H1 (cell line): ENCODE measurements at regions of chr6 and their contacts with region 1.

Region 1: GRCh38 chr6:142474531-142475289 is 172.9 kb downstream of the ADGRG6 start:
- DNase-seq: peak; percentile 33 to 76
- H3K4me3 ChIP-seq: peak overlapping the region in 1 of 4 experiments; percentile 30; a peak in 1 of 8 replicates
- H3K27ac ChIP-seq: no peak overlapping the region
- H3K4me1 ChIP-seq: peaks cover 0 to 4% (median 0%) of the 10 kb centered on the region in 4 experiments; a peak in 1 of 7 replicates
- H3K27me3 ChIP-seq: no peaks in the 10 kb centered on the region
- CTCF ChIP-seq: peak; percentile 68 to 83 (median 70)
- EP300 ChIP-seq: no peak
- POLR2A ChIP-seq: no peak
- RAD21 ChIP-seq: peak; percentile 80 to 83

Region 2: DNA sequence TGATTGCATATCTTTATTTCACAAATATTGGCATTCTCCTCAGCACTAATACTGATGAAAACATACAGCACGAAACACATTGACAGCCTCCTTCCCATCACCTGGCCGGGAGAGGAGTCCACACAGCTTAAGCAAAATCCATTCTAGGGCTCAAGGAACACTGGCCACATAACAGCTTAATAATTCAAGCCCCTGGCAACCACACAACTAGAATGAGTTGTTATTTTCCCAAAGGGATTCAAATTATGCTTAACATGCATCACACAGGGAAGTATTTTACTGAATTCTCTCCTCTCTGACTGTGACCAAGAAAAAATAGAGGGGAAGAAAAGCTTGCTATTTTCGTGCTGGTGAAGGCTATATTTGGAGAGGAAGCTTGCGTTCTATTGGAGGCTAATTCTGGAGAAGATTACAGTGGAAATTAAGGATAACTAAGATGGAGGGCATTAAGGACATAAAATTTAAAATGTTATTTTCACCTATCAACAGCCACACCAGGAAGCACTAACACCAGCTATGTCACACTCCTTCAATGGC is 25.6 kb after region 1 on chr6:
- CTCF ChIA-PET with region 1: interaction called, 13 read pairs
- POLR2A ChIA-PET with region 1: no interaction called
- DNase-seq: no peak
- H3K4me3 ChIP-seq: no peak overlapping the region
- H3K27ac ChIP-seq: no peak overlapping the region
- H3K4me1 ChIP-seq: no peaks in the 10 kb centered on the region
- H3K27me3 ChIP-seq: no peaks in the 10 kb centered on the region
- CTCF ChIP-seq: no peak
- EP300 ChIP-seq: no peak
- POLR2A ChIP-seq: no peak
- RAD21 ChIP-seq: no peak

Region 3: DNA sequence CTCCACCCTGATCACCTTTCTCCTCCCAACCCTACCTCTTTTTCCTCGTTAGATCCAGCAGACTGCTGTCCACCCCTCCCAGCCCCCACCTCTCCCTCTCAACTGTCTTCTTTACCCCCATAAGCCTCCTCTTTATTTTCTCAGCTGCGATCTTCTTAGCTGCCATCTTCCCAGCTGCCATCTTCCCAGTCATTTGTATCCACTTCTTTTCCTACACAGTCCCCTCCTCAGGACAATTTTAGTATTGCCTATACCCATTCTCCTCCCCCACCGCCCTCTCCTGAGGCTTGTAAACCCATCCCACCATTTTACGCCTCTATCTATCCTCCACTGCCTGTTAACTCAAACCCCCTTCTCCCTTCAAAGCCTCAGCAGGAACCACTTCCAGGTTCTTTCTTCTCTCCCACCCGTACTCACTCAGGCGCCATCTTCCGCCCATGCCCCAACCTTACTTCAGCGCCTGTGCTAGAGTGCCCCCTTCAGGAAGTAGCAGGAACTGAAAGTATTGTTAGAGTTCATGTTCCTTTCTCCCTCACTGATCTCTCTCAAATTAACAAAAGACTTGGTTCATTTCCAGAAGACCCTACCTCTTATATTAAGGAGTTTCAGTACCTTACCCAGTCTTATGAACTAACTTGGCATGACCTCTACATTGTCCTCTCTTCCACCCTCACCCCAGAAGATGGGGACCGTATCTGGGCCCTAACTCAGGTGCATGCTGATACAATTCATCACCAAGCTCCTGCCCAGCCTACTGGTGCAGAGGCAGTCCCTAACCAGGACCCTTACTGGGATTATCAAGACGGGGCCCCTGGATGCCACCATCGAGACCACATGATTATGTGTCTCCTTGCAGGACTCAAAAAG is 63.1 kb after region 1 on chr6:
- CTCF ChIA-PET with region 1: interaction called, 36 read pairs
- POLR2A ChIA-PET with region 1: no interaction called
- DNase-seq: peak; percentile 9 to 79
- H3K4me3 ChIP-seq: no peak overlapping the region
- H3K27ac ChIP-seq: no peak overlapping the region
- H3K4me1 ChIP-seq: no peaks in the 10 kb centered on the region
- H3K27me3 ChIP-seq: no peaks in the 10 kb centered on the region
- CTCF ChIP-seq: peak; percentile 53 to 80 (median 67)
- EP300 ChIP-seq: no peak
- POLR2A ChIP-seq: no peak
- RAD21 ChIP-seq: peak; percentile 81 to 84

Region 4: GRCh38 chr6:142566628-142567396 is 92.1 kb after region 1 on chr6:
- CTCF ChIA-PET with region 1: interaction called, 22 read pairs
- POLR2A ChIA-PET with region 1: no interaction called
- DNase-seq: peak; percentile 39 to 92
- H3K4me3 ChIP-seq: no peak overlapping the region
- H3K27ac ChIP-seq: no peak overlapping the region
- H3K4me1 ChIP-seq: peaks cover 0 to 5% (median 2%) of the 10 kb centered on the region in 4 experiments; a peak in 5 of 7 replicates
- H3K27me3 ChIP-seq: no peaks in the 10 kb centered on the region
- CTCF ChIP-seq: peak; percentile 74 to 86 (median 75)
- EP300 ChIP-seq: no peak
- POLR2A ChIP-seq: no peak
- RAD21 ChIP-seq: peak; percentile 82 to 85

Region 5: GRCh38 chr6:143026696-143027449 is 552.2 kb after region 1 on chr6:
- CTCF ChIA-PET with region 1: interaction called, 11 read pairs
- POLR2A ChIA-PET with region 1: no interaction called
- DNase-seq: peak; percentile 27 to 71
- H3K4me3 ChIP-seq: no peak overlapping the region
- H3K27ac ChIP-seq: no peak overlapping the region
- H3K4me1 ChIP-seq: no peaks in the 10 kb centered on the region
- H3K27me3 ChIP-seq: no peaks in the 10 kb centered on the region
- CTCF ChIP-seq: peak; percentile 74 to 85 (median 82)
- EP300 ChIP-seq: no peak
- POLR2A ChIP-seq: no peak
- RAD21 ChIP-seq: peak; percentile 88 to 91